Activated B cell treated with CpG ODN at 0.5 μM for 24 hours (primary cell): ENCODE measurements at regions of chr6 and their contacts with region 1.

Region 1: DNA sequence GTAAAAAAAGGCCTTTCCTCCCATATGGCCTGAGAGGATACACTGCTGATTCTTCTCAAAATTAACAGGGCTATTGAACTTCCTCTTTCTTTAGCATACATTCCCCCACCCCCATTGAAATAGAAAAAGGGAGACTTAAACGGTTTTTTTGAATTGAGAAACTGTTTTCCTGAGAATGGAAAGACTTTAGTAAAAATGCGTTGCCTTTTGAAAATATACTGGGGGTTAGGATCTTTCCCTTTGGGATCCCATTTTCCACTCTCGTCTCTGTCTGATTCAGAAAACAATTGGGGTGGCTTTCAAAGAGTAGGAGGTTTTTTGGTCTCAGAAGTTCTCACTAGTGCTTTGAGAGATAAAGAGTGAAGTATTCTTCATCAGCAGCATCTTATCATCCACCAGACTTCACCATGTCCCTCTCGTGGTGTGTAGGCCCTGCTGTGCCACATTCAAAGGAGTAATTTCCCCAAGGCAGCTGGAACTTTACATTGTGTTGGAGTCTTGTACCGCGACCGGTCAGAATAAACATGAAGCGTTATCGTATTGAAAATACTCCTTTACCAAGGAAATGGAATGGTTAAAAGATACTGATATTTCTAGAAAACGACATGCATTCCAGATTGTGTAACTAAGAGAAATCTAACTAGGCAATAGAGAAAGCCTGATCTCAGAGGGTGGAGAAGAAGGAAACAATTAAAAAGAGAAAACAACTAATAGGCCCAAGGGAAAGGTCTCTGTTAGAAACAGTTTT is 10.6 kb downstream of the MYB start:
- DNase-seq: no peak
- ATAC-seq: peak; percentile 54
- H3K4me3 Mint-ChIP-seq: no peak overlapping the region
- H3K27ac Mint-ChIP-seq: peak overlapping the region; percentile 25
- H3K4me1 Mint-ChIP-seq: peaks cover 20% of the 10 kb centered on the region
- H3K27me3 Mint-ChIP-seq: no peaks in the 10 kb centered on the region
- CTCF ChIP-seq: no peak

Region 2: GRCh38 chr6:135204951-135205350 is 13.3 kb after region 1 on chr6:
- CTCF ChIA-PET with region 1: no interaction called
- POLR2A ChIA-PET with region 1: no interaction called
- intact Hi-C with region 1: loop called (anchors 1 kb)
- DNase-seq: no peak
- ATAC-seq: no peak
- H3K4me3 Mint-ChIP-seq: no peak overlapping the region
- H3K27ac Mint-ChIP-seq: no peak overlapping the region
- H3K4me1 Mint-ChIP-seq: peaks cover 4% of the 10 kb centered on the region
- H3K27me3 Mint-ChIP-seq: no peaks in the 10 kb centered on the region
- CTCF ChIP-seq: no peak

Region 3: GRCh38 chr6:136901212-136901784 is 1709.6 kb after region 1 on chr6:
- CTCF ChIA-PET with region 1: no interaction called
- POLR2A ChIA-PET with region 1: no interaction called
- intact Hi-C with region 1: no loop called
- DNase-seq: no peak
- ATAC-seq: no peak
- H3K4me3 Mint-ChIP-seq: no peak overlapping the region
- H3K27ac Mint-ChIP-seq: no peak overlapping the region
- H3K4me1 Mint-ChIP-seq: no peaks in the 10 kb centered on the region
- H3K27me3 Mint-ChIP-seq: no peaks in the 10 kb centered on the region
- CTCF ChIP-seq: no peak